ENCODE measurements at regions of chr17 and their contacts with region 1.

Region 1: DNA sequence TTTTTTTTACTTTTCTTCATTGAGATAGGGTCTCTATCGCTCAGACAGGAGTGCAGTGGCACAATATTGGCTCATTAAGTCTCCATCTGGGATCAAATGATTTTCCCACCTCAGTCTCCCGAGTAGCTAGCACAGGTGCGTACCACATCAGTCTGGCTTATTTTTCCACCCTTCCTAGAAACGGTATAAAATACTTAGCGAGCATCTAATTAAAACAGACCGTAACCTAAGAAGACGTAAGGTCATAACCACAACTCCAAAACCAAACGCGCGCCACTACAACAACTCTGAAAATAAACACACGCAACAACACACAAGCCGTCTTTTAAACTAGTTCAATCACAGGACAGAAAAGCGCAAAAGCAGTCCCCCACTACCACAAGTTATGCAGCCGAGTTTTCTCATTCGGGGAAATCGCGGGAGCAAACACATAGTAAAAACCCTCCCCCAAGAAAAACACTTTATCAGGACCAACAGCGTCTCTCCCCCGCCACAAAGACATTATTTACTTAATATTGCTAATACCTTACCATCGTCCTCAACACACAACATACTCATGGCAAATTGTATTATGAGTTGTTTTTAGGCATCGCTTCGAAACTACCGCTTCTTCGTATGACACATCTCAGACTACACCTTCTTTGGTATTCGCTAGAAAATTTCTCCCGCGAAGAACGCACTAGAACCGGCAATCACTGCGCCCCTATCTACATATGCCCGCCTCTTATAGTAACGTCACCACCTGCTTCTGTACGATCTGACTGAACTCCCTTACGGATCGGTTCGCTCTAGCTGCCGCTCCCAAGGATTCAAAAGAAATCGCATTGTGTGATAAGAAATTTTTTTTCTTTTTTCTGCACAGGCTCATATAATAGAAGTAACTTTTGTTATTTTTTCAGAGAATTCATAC is 32.8 kb downstream of the TEX14 start:
- DNase-seq: peak; percentile 87 to 91 (median 89)
- H3K4me3 ChIP-seq: peak overlapping the region; percentile 43 to 83
- H3K4me3 Mint-ChIP-seq: peak overlapping the region; percentile 83 to 95 (median 91)
- H3K27ac ChIP-seq: peak overlapping the region; percentile 77
- H3K27ac Mint-ChIP-seq: peak overlapping the region; percentile 97 to 100 (median 100)
- H3K4me1 ChIP-seq: peaks cover 13% of the 10 kb centered on the region
- H3K4me1 Mint-ChIP-seq: peaks cover 12 to 18% (median 15%) of the 10 kb centered on the region in 4 donors
- H3K27me3 ChIP-seq: no peaks in the 10 kb centered on the region
- H3K27me3 Mint-ChIP-seq: peaks cover 0 to 2% of the 10 kb centered on the region in 2 donors

Region 2: GRCh38 chr17:58692239-58693055 is 33.4 kb after region 1 on chr17 and contains the start of gene RAD51C:
- CTCF ChIA-PET with region 1: no interaction called
- POLR2A ChIA-PET with region 1: interaction called, 13 read pairs
- intact Hi-C with region 1: loop called (anchors 1 kb)
- DNase-seq: peak; percentile 77 to 85 (median 84)
- H3K4me3 ChIP-seq: peak within 1 kb of the TSS; percentile 77 to 83
- H3K4me3 Mint-ChIP-seq: peak within 1 kb of the TSS; percentile 85 to 97 (median 93)
- H3K27ac ChIP-seq: peak within 1 kb of the TSS; percentile 72
- H3K27ac Mint-ChIP-seq: peak within 1 kb of the TSS; percentile 73 to 98 (median 92)
- H3K4me1 ChIP-seq: peaks cover 29% of the 10 kb centered on the region
- H3K4me1 Mint-ChIP-seq: peaks cover 18 to 27% (median 23%) of the 10 kb centered on the region in 4 donors
- H3K27me3 ChIP-seq: no peaks in the 10 kb centered on the region
- H3K27me3 Mint-ChIP-seq: no peaks in the 10 kb centered on the region
- total RNA-seq, gene RAD51C: 25.8 to 28.2 TPM